ENCODE measurements at regions of chr10 and their contacts with region 1.

Region 1: DNA sequence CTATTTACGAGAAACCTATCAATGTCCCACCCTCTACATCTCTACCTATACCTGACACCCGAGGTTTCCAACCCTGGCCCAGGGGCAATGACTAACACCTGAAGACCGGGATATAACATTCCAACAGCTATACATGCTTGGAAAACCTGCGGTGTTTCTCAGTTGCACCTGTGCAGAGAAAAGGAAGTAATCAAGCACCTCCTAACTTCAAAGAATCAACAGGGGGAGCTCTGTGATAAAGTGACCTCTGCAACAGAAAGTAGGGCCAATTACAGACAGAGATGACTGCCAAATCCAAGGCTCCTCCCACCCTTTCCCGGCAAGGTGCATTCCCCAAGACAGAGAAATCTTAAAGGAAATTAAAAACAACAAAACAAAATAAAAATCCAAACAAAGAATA is 41.3 kb downstream of the CCDC6 start:
- DNase-seq: no peak
- ATAC-seq: peak; percentile 76
- H3K4me3 Mint-ChIP-seq: no peak overlapping the region
- H3K27ac Mint-ChIP-seq: peak overlapping the region; percentile 82
- H3K4me1 Mint-ChIP-seq: peaks cover 69% of the 10 kb centered on the region
- H3K27me3 Mint-ChIP-seq: no peaks in the 10 kb centered on the region
- CTCF ChIP-seq: no peak

Region 2: GRCh38 chr10:59633063-59633462 is 232.0 kb before region 1 on chr10:
- CTCF ChIA-PET with region 1: no interaction called
- POLR2A ChIA-PET with region 1: no interaction called
- intact Hi-C with region 1: no loop called
- DNase-seq: no peak
- ATAC-seq: no peak
- H3K4me3 Mint-ChIP-seq: no peak overlapping the region
- H3K27ac Mint-ChIP-seq: no peak overlapping the region
- H3K4me1 Mint-ChIP-seq: no peaks in the 10 kb centered on the region
- H3K27me3 Mint-ChIP-seq: peaks cover 2% of the 10 kb centered on the region
- CTCF ChIP-seq: no peak

Region 3: GRCh38 chr10:59674211-59674836 is 190.8 kb before region 1 on chr10:
- CTCF ChIA-PET with region 1: no interaction called
- POLR2A ChIA-PET with region 1: no interaction called
- intact Hi-C with region 1: no loop called
- DNase-seq: no peak
- ATAC-seq: no peak
- H3K4me3 Mint-ChIP-seq: no peak overlapping the region
- H3K27ac Mint-ChIP-seq: no peak overlapping the region
- H3K4me1 Mint-ChIP-seq: peaks cover 44% of the 10 kb centered on the region
- H3K27me3 Mint-ChIP-seq: no peaks in the 10 kb centered on the region
- CTCF ChIP-seq: no peak

Region 4: GRCh38 chr10:59709395-59710125 is 155.5 kb before region 1 on chr10 and contains the start of gene SLC16A9:
- CTCF ChIA-PET with region 1: no interaction called
- POLR2A ChIA-PET with region 1: interaction called, 13 read pairs
- intact Hi-C with region 1: no loop called
- DNase-seq: peak; percentile 33
- ATAC-seq: peak; percentile 85
- H3K4me3 Mint-ChIP-seq: peak within 1 kb of the TSS; percentile 82
- H3K27ac Mint-ChIP-seq: no peak within 1 kb of the TSS
- H3K4me1 Mint-ChIP-seq: peaks cover 6% of the 10 kb centered on the region
- H3K27me3 Mint-ChIP-seq: peaks cover 25% of the 10 kb centered on the region
- CTCF ChIP-seq: no peak
- total RNA-seq, gene SLC16A9: 0.81 and 1.2 TPM in 2 replicates

Region 5: GRCh38 chr10:59885430-59886134 is 20.5 kb after region 1 on chr10:
- CTCF ChIA-PET with region 1: interaction called, 11 read pairs
- POLR2A ChIA-PET with region 1: interaction called, 3 read pairs
- intact Hi-C with region 1: loop called (anchors 2 kb)
- DNase-seq: peak; percentile 69
- ATAC-seq: peak; percentile 89
- H3K4me3 Mint-ChIP-seq: peak overlapping the region; percentile 45
- H3K27ac Mint-ChIP-seq: peak overlapping the region; percentile 68
- H3K4me1 Mint-ChIP-seq: peaks cover 87% of the 10 kb centered on the region
- H3K27me3 Mint-ChIP-seq: no peaks in the 10 kb centered on the region
- CTCF ChIP-seq: no peak

Region 6: DNA sequence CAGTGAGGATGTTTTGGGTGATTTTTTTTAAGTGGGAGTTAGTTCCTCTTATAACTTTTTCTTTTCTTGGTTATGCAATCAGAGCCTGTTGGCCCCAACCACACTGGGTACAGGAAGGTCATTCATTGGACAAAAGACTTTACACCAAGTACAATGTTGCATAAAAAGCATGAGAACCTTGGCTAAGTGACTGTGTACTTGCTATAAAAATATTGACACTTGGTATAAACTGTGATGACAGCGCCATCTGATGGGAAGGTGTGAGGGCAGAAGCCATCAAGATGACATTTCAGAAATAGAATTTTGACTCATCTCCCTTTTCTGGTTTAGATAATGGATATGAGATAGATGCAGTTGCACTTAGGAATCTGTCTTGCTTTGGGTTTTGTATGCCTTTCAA is 167.6 kb after region 1 on chr10:
- CTCF ChIA-PET with region 1: interaction called, 27 read pairs
- POLR2A ChIA-PET with region 1: interaction called, 11 read pairs
- intact Hi-C with region 1: loop called (anchors 1 kb)
- DNase-seq: no peak
- ATAC-seq: no peak
- H3K4me3 Mint-ChIP-seq: no peak overlapping the region
- H3K27ac Mint-ChIP-seq: no peak overlapping the region
- H3K4me1 Mint-ChIP-seq: peaks cover 14% of the 10 kb centered on the region
- H3K27me3 Mint-ChIP-seq: no peaks in the 10 kb centered on the region
- CTCF ChIP-seq: no peak

Measured in activated B cell treated with CpG ODN at 0.5 μM for 24 hours (primary cell).